Body of pancreas (tissue), 4 donors: ENCODE measurements at regions of chr3 and their contacts with region 1.

Region 1: DNA sequence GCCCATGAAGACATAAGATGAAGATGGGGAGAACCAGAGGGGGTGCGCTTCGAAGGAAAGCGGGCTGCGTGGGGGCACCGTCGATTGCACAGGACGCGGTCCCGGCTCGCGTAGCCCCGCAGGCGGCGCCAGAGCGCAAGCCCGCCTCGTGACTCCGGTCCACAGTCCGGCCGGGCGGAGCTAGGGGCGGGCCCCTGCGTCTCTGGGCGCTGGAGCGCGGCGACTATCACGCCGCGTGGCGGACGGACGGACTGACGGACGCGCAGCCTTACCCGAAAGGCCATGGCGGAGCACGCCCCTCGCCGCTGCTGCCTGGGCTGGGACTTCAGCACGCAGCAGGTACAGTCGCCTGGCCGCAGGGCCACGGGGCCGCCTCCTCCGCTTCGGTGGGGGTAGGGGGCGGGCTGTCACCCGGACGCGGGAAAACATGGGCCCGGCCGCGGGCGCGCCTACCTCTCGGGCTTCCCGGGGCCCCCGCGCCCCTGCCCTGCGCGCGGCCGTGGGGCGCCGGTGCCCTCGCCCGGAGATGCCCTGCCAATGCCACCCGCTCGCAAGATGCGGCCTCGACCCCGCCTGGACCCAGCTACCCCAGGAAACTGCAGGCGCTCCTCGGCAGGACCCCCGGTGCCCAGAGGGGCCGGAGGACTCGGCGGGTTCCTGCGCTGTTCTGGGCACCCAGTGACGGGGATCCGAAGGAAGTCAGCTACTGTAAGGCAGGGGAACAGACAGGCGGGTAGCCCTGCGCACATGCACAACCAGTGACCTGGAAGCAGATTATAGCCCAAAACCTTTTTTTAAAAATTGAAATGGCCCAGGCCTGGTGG is at the start of gene XYLB:
- DNase-seq: peak; percentile 88 to 94 (median 91)
- ATAC-seq: peak; percentile 96
- H3K4me3 ChIP-seq: peak within 1 kb of the TSS; percentile 68 to 70
- H3K27ac ChIP-seq: peak within 1 kb of the TSS; percentile 53 to 73 (median 68)
- H3K4me1 ChIP-seq: peaks cover 13% of the 10 kb centered on the region
- H3K27me3 ChIP-seq: no peaks in the 10 kb centered on the region
- CTCF ChIP-seq: peak; percentile 69 to 98 (median 92)
- POLR2A ChIP-seq: peak; percentile 33 to 65 (median 60)
- total RNA-seq, gene XYLB: 7.8 to 49.8 TPM

Region 2: GRCh38 chr3:38479431-38480092 is 132.8 kb after region 1 on chr3:
- intact Hi-C with region 1: loop called (anchors 5 kb)
- DNase-seq: peak; percentile 75 to 83 (median 80)
- ATAC-seq: peak; percentile 89
- H3K4me3 ChIP-seq: no peak overlapping the region
- H3K27ac ChIP-seq: no peak overlapping the region
- H3K4me1 ChIP-seq: no peaks in the 10 kb centered on the region
- H3K27me3 ChIP-seq: no peaks in the 10 kb centered on the region
- CTCF ChIP-seq: peak; percentile 74 to 91 (median 88)
- POLR2A ChIP-seq: no peak